Kidney (tissue), 22 donors: ENCODE measurements at regions of chr2 and their contacts with region 1.

Region 1: GRCh38 chr2:197310271-197310985 is at the start of gene ANKRD44:
- DNase-seq: peak; percentile 89 to 98 (median 93)
- H3K4me3 ChIP-seq: peak within 1 kb of the TSS; percentile 70 to 87 (median 75)
- H3K27ac ChIP-seq: peak within 1 kb of the TSS; percentile 57 to 78
- H3K4me1 ChIP-seq: peaks cover 0 to 3% (median 0%) of the 10 kb centered on the region in 3 donors
- H3K27me3 ChIP-seq: no peaks in the 10 kb centered on the region
- CTCF ChIP-seq: peak; percentile 64
- total RNA-seq, gene ANKRD44: 39.2 TPM

Region 2: DNA sequence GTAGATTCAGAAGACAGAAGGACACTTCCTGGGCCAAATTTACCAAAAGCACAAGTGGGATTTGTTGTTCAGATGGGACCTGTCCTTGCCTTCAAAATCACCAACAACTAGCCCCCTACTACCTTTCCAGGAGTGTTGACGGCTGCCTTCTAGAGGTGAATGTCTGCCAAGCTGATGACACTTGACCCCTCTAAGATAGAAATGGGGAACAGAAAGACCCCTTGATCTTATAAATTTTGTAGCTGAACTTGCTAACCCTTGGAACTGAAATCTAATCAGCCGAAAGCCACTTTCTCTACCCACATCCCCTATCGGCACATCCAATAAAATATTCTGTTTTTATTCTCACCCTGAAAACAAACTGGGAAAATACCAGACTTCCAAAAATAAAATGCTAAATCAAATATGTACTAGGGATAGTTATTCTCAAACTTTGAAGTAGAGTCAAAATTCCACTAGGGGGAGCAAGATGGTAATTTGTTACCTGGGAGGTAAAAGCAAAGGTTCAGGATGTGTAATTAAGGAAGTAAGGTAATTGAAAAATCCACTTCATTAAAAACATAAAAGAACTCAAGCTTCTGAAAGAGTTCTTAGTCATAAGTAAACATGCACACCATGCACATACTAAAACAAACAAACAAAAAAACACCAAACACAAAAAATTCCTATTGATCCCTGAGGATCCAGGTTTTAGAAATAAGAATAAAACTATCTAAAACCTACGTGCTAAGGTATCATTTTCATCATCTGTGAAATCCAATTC is 119.1 kb before region 1 on chr2:
- intact Hi-C with region 1: loop called (anchors 10 kb)
- DNase-seq: peak in 1 of 5 donors; percentile 67
- H3K4me3 ChIP-seq: no peak overlapping the region
- H3K27ac ChIP-seq: no peak overlapping the region
- H3K4me1 ChIP-seq: peaks cover 0 to 2% (median 2%) of the 10 kb centered on the region in 3 donors
- H3K27me3 ChIP-seq: no peaks in the 10 kb centered on the region
- CTCF ChIP-seq: peak; percentile 57

Region 3: DNA sequence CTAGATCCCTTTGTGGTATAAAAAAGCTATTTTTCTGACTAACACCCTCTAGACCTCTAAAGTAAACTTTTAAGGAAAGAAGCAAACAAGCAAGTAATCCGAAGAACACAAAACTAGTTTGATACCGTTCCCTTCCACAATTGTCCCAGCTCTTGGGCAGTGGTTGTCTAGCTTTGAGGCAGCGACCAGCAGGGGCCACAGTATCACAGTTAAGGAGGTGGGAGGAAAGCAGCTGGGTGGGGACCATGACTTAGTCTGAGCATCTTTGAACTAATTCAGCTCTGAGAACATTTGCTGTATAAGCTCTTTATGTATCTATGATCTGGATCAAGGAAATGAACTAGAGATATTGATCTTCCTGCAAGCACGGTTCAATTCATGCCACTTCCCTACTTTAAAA is 73.4 kb after region 1 on chr2:
- intact Hi-C with region 1: no loop called
- DNase-seq: no peak
- H3K4me3 ChIP-seq: no peak overlapping the region
- H3K27ac ChIP-seq: no peak overlapping the region
- H3K4me1 ChIP-seq: no peaks in the 10 kb centered on the region
- H3K27me3 ChIP-seq: no peaks in the 10 kb centered on the region
- CTCF ChIP-seq: no peak

Region 4: GRCh38 chr2:197453161-197453914 is 142.9 kb after region 1 on chr2 and contains the start of gene COQ10B:
- intact Hi-C with region 1: no loop called
- DNase-seq: peak; percentile 99 to 100 (median 100)
- H3K4me3 ChIP-seq: peak within 1 kb of the TSS; percentile 97 to 100 (median 97)
- H3K27ac ChIP-seq: peak within 1 kb of the TSS; percentile 100
- H3K4me1 ChIP-seq: peaks cover 0 to 16% (median 13%) of the 10 kb centered on the region in 3 donors
- H3K27me3 ChIP-seq: no peaks in the 10 kb centered on the region
- CTCF ChIP-seq: peak; percentile 21
- total RNA-seq, gene COQ10B: 28.6 TPM